ENCODE measurements at regions of chr10 and their contacts with region 1.

Region 1: GRCh38 chr10:75187961-75188426 is 22.6 kb upstream of the VDAC2 start:
- DNase-seq: peak; percentile 55 to 90
- ATAC-seq: peak; percentile 95 to 97 (median 97)
- H3K4me3 ChIP-seq: no peak overlapping the region
- H3K4me3 Mint-ChIP-seq: peak overlapping the region; percentile 31
- H3K27ac ChIP-seq: peak overlapping the region; percentile 67
- H3K27ac Mint-ChIP-seq: peak overlapping the region; percentile 70 to 75
- H3K4me1 ChIP-seq: peaks cover 15% of the 10 kb centered on the region
- H3K4me1 Mint-ChIP-seq: peaks cover 5 to 8% of the 10 kb centered on the region in 2 donors
- H3K27me3 ChIP-seq: no peaks in the 10 kb centered on the region
- H3K27me3 Mint-ChIP-seq: no peaks in the 10 kb centered on the region
- CTCF ChIP-seq: peak; percentile 77

Region 2: DNA sequence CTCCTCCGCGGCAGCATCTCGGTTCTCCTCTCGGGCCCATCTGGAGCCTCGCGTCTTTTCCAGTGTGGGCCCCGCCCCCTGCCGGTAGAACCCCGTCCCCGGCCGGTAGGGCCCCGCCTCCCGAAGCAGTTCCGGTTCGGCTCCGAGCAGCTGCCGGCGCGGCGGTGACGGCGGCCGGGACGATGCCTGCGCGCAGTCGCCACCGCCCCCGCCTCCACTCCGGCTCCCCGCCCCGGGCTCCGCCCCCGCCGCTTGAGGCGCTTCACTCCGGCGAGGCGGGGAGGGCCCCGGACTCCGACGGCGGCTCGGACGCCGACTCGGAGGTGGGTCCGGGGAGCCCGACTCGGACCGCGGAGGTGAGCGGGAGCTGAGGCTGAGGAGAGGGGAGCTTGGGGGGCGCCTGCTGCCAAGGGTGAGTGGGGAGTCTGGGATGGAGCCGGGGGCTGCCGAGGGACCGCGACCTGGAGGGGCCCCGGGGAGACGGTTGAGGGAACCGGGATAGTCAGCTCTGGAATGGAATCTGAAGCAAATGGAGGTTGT is 76.6 kb before region 1 on chr10 and contains the start of gene SAMD8:
- intact Hi-C with region 1: loop called (anchors 10 kb)
- DNase-seq: peak; percentile 91 to 98
- ATAC-seq: peak; percentile 80 to 90 (median 86)
- H3K4me3 ChIP-seq: peak within 1 kb of the TSS; percentile 88
- H3K4me3 Mint-ChIP-seq: peak within 1 kb of the TSS; percentile 98
- H3K27ac ChIP-seq: peak within 1 kb of the TSS; percentile 95
- H3K27ac Mint-ChIP-seq: peak within 1 kb of the TSS; percentile 83 to 94
- H3K4me1 ChIP-seq: peaks cover 21% of the 10 kb centered on the region
- H3K4me1 Mint-ChIP-seq: peaks cover 31 to 37% of the 10 kb centered on the region in 2 donors
- H3K27me3 ChIP-seq: no peaks in the 10 kb centered on the region
- H3K27me3 Mint-ChIP-seq: no peaks in the 10 kb centered on the region
- CTCF ChIP-seq: no peak
- total RNA-seq, gene SAMD8: 26.6 to 30.9 (median 29.6) TPM

Region 3: GRCh38 chr10:75165684-75166622 is 22.0 kb before region 1 on chr10:
- intact Hi-C with region 1: no loop called
- DNase-seq: peak in 1 of 2 donors; percentile 52
- ATAC-seq: peak; percentile 67 to 79 (median 76)
- H3K4me3 ChIP-seq: no peak overlapping the region
- H3K4me3 Mint-ChIP-seq: peak overlapping the region; percentile 83
- H3K27ac ChIP-seq: peak overlapping the region; percentile 70
- H3K27ac Mint-ChIP-seq: peak overlapping the region; percentile 80
- H3K4me1 ChIP-seq: peaks cover 27% of the 10 kb centered on the region
- H3K4me1 Mint-ChIP-seq: peaks cover 28 to 36% of the 10 kb centered on the region in 2 donors
- H3K27me3 ChIP-seq: no peaks in the 10 kb centered on the region
- H3K27me3 Mint-ChIP-seq: no peaks in the 10 kb centered on the region
- CTCF ChIP-seq: no peak

Region 4: GRCh38 chr10:75210282-75211006 is 22.4 kb after region 1 on chr10 and contains the start of gene VDAC2:
- intact Hi-C with region 1: loop called (anchors 2 kb)
- DNase-seq: peak; percentile 98
- ATAC-seq: peak; percentile 89 to 96 (median 90)
- H3K4me3 ChIP-seq: peak within 1 kb of the TSS; percentile 97
- H3K4me3 Mint-ChIP-seq: peak within 1 kb of the TSS; percentile 100
- H3K27ac ChIP-seq: peak within 1 kb of the TSS; percentile 100
- H3K27ac Mint-ChIP-seq: peak within 1 kb of the TSS; percentile 95 to 99
- H3K4me1 ChIP-seq: peaks cover 18% of the 10 kb centered on the region
- H3K4me1 Mint-ChIP-seq: peaks cover 16 to 28% of the 10 kb centered on the region in 2 donors
- H3K27me3 ChIP-seq: no peaks in the 10 kb centered on the region
- H3K27me3 Mint-ChIP-seq: no peaks in the 10 kb centered on the region
- CTCF ChIP-seq: no peak
- total RNA-seq, gene VDAC2: 110 to 124 (median 117) TPM